Common myeloid progenitor, CD34-positive (primary cell): ENCODE measurements at regions of chr1 and their contacts with region 1.

Region 1: DNA sequence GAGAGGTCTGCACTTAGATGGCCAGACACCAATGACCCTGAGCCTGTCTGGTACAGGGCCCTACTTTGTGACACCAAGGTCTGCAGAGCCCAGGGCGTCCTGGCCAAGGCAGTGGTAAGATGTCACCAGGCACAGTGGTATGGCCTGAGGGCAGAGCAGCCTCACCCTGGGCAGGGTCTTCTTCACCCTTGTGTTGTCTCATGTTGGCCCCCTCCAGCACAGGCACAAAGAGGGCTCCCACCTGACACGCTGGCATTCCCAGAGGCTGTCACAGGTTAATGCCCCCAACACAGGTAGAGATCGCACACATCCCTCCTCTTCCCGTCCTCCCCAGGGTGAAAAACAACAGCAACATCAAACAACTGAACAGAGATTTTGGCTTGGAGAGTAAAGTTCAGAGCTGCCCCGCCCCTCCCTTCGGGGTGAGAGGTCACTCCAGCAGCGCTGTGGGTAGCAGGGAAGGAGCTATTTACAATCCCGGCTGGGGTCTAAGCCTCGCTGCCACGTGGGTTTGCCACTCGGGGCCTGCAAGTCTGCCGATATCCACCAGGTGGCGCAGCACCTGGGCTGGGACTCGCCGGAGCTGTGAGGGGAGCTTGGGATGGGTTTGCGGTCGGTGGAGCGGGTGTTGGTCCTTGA is 12.6 kb downstream of the EFNA3 start:
- DNase-seq: peak; percentile 79 to 85 (median 80)
- H3K4me3 ChIP-seq: no peak overlapping the region
- H3K27ac ChIP-seq: no peak overlapping the region
- H3K4me1 ChIP-seq: peaks cover 0 to 30% (median 27%) of the 10 kb centered on the region in 4 experiments
- H3K27me3 ChIP-seq: no peaks in the 10 kb centered on the region

Region 2: DNA sequence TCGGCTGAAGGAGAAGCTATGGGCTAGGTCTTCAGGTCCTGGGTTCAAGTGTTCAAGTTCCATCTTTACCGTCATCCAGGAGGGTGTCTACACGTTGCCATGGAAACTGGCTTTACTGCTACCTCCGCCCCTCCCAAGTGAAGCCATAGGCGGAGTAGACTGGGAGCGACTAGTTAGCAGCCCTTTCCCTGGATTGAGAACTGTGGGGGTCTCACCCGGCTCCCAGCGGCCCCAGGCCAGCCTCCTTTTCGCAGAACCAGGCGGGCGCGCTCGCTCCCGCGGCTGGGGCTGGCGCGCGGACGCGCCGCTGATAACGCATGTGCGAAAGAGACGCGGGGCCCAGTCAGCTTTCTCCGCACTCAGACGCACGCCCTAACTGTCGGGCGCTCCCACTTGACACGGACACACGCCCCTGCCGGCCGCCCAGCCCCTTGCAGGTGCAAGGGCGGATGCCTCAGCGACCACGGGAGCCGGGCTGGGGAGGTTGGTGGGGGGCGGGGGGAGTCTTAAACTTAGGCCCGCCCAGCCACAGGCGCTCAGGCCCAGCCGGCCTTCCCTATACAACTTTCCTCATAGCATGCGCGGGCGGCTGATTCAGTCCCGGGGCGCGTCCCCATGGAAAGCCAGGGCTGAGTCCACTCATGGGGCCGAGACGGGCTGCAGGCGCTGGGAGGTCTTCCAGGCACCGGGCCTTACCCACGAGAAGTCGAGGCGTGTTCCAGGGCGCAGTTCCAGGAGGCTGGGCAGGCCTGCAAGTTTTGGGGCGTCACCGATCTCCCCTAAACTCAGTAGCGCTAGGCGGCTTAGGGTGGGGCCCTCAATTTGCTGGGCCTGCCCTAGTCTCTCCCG is 20.2 kb before region 1 on chr1:
- CTCF ChIA-PET with region 1: interaction called, 168 read pairs
- POLR2A ChIA-PET with region 1: no interaction called
- DNase-seq: peak; percentile 91 to 95 (median 94)
- H3K4me3 ChIP-seq: peak overlapping the region in 6 of 7 experiments; percentile 28 to 75 (median 44)
- H3K27ac ChIP-seq: peak overlapping the region in 1 of 2 experiments; percentile 43
- H3K4me1 ChIP-seq: peaks cover 0 to 36% (median 26%) of the 10 kb centered on the region in 4 experiments
- H3K27me3 ChIP-seq: no peaks in the 10 kb centered on the region

Region 3: GRCh38 chr1:155117617-155118016 is 26.4 kb after region 1 on chr1:
- CTCF ChIA-PET with region 1: interaction called, 21 read pairs
- POLR2A ChIA-PET with region 1: interaction called, 4 read pairs
- DNase-seq: no peak
- H3K4me3 ChIP-seq: no peak overlapping the region
- H3K27ac ChIP-seq: no peak overlapping the region
- H3K4me1 ChIP-seq: no peaks in the 10 kb centered on the region
- H3K27me3 ChIP-seq: no peaks in the 10 kb centered on the region

Region 4: DNA sequence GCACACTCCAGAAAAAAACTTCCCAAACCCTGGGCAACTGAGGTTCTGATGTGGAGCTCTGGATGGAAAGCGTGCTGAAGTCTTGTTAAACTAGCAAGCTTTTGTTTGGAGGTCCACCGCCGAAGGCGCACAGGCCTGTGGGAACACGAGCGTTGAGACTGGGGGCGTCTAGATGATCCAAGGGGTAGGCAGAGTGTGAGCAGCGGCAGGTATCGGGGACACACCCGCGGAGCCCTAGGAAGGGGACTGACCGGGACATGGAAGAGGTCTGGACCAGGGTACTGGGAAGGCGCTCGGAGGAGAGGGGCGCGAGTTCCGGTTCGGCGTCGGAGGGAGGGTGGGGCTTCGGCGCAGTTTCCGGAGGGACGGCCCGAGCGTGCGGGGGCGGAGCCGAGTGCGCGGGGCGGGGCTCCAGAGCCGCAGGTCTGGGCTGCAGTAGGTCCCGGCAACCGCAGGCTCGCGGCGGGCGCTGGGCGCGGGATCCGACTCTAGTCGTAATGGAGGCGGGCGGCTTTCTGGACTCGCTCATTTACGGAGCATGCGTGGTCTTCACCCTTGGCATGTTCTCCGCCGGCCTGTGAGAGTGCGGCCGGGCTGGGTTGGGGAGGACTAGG is 44.3 kb after region 1 on chr1 and contains the start of gene SLC50A1:
- CTCF ChIA-PET with region 1: interaction called, 48 read pairs
- POLR2A ChIA-PET with region 1: no interaction called
- DNase-seq: peak; percentile 95 to 96 (median 96)
- H3K4me3 ChIP-seq: peak within 1 kb of the TSS; percentile 47 to 89 (median 76)
- H3K27ac ChIP-seq: peak within 1 kb of the TSS; percentile 97 to 98
- H3K4me1 ChIP-seq: peaks cover 16 to 51% (median 45%) of the 10 kb centered on the region in 4 experiments
- H3K27me3 ChIP-seq: no peaks in the 10 kb centered on the region

Region 5: DNA sequence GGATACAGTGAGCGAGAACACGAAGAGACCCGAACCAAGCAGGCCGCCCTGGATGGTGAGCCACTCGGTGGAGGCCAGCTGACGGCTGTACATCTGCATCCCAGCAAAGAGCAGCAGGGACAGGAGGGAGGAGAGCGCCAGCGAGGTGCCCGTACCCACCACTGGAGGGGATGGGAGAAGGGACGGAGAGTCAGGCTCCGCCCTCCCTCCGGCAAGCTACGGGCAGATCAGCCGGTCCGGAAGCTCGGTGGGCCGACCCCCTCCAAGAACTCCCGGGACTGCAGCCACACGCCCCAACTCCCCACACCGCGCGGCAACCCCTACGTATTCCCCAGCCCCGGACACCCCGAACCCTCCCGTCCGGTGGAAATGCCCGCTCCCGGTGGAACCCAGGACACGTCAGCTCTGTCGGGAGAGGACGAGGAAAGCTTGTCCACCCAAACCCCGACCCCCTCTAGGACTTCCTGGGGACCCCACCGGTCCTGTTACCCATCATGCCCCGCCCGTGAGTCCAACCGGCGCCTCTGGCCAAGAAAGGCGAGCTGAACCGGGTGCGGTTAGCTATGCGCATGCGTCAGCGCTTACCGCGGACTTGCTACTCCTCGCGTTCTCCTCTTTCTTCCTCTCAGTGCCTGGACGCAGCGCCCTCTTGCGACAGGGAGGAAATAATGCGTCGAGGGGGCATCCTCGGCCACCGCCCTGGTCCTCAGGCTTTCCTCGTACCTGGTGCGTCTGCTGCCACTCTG is 81.7 kb after region 1 on chr1 and contains the start of gene KRTCAP2:
- CTCF ChIA-PET with region 1: interaction called, 258 read pairs
- POLR2A ChIA-PET with region 1: interaction called, 5 read pairs
- DNase-seq: peak; percentile 95 to 97 (median 96)
- H3K4me3 ChIP-seq: peak within 1 kb of the TSS; percentile 77 to 95 (median 88)
- H3K27ac ChIP-seq: peak within 1 kb of the TSS; percentile 84 to 93
- H3K4me1 ChIP-seq: peaks cover 0 to 47% (median 41%) of the 10 kb centered on the region in 4 experiments
- H3K27me3 ChIP-seq: no peaks in the 10 kb centered on the region

Region 6: DNA sequence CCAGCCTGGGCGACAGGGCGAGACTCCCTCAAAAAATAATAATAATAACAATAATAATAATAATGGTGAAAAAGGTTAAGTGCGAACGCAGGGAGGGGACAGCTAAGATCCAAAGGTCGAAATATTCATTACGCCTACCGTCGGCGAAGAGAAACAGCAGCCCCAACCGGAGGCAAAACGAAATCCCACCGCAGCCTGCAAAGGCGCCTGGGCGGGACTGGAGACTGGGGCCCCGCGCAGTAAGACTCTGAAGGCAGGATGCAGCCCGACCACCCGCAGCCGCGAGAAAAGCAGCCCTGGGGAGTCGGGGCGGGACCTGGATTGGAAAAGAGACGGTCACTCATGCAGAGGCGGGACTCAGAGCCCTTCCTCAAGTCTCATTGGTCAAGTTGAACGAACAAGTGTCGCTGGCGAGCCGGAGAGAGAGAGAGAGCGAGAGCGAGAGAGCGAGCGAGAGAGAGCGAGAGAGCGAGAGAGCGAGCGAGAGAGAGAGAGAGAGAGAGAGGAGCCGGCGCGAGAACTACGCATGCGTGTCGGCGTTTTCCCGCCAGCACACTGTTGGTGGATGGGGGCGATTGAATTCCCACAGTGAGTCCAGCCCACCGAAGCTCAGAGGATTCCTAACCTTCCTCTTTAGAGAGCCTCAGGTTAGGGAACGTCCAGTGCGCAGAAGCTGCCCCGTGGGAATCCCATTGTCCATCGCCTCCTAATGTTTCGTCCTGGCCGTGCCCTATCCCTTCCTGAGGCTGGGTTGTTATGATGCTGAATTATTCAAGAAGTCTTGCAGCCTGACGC is 153.4 kb after region 1 on chr1:
- CTCF ChIA-PET with region 1: no interaction called
- POLR2A ChIA-PET with region 1: no interaction called
- DNase-seq: peak; percentile 99 to 100 (median 100)
- H3K4me3 ChIP-seq: peak overlapping the region; percentile 28 to 79 (median 74)
- H3K27ac ChIP-seq: peak overlapping the region; percentile 33 to 77
- H3K4me1 ChIP-seq: peaks cover 6 to 41% (median 32%) of the 10 kb centered on the region in 4 experiments
- H3K27me3 ChIP-seq: no peaks in the 10 kb centered on the region

Region 7: GRCh38 chr1:155339515-155340097 is 248.4 kb after region 1 on chr1:
- CTCF ChIA-PET with region 1: no interaction called
- POLR2A ChIA-PET with region 1: no interaction called
- DNase-seq: no peak
- H3K4me3 ChIP-seq: no peak overlapping the region
- H3K27ac ChIP-seq: no peak overlapping the region
- H3K4me1 ChIP-seq: no peaks in the 10 kb centered on the region
- H3K27me3 ChIP-seq: no peaks in the 10 kb centered on the region